CD4-positive, alpha-beta memory T cell (primary cell): ENCODE measurements at regions of chr2 and their contacts with region 1.

Region 1: GRCh38 chr2:96888072-96889011 is 18.5 kb upstream of the SEMA4C start:
- DNase-seq: no peak
- H3K4me3 ChIP-seq: no peak overlapping the region
- H3K4me3 Mint-ChIP-seq: no peak overlapping the region
- H3K27ac ChIP-seq: no peak overlapping the region
- H3K27ac Mint-ChIP-seq: peak overlapping the region in 4 of 7 donors; percentile 50 to 86 (median 78)
- H3K4me1 ChIP-seq: peaks cover 30% of the 10 kb centered on the region
- H3K4me1 Mint-ChIP-seq: peaks cover 30 to 46% (median 36%) of the 10 kb centered on the region in 4 donors
- H3K27me3 ChIP-seq: no peaks in the 10 kb centered on the region
- H3K27me3 Mint-ChIP-seq: no peaks in the 10 kb centered on the region

Region 2: GRCh38 chr2:96374211-96374951 is 514.0 kb before region 1 on chr2:
- CTCF ChIA-PET with region 1: no interaction called
- POLR2A ChIA-PET with region 1: no interaction called
- intact Hi-C with region 1: no loop called
- DNase-seq: no peak
- H3K4me3 ChIP-seq: no peak overlapping the region
- H3K4me3 Mint-ChIP-seq: no peak overlapping the region
- H3K27ac ChIP-seq: no peak overlapping the region
- H3K27ac Mint-ChIP-seq: no peak overlapping the region
- H3K4me1 ChIP-seq: no peaks in the 10 kb centered on the region
- H3K4me1 Mint-ChIP-seq: no peaks in the 10 kb centered on the region
- H3K27me3 ChIP-seq: no peaks in the 10 kb centered on the region
- H3K27me3 Mint-ChIP-seq: no peaks in the 10 kb centered on the region

Region 3: GRCh38 chr2:96927405-96928243 is 39.3 kb after region 1 on chr2:
- CTCF ChIA-PET with region 1: no interaction called
- POLR2A ChIA-PET with region 1: interaction called, 12 read pairs
- intact Hi-C with region 1: no loop called
- DNase-seq: no peak
- H3K4me3 ChIP-seq: no peak overlapping the region
- H3K4me3 Mint-ChIP-seq: no peak overlapping the region
- H3K27ac ChIP-seq: no peak overlapping the region
- H3K27ac Mint-ChIP-seq: no peak overlapping the region
- H3K4me1 ChIP-seq: peaks cover 27% of the 10 kb centered on the region
- H3K4me1 Mint-ChIP-seq: peaks cover 17 to 40% (median 24%) of the 10 kb centered on the region in 4 donors
- H3K27me3 ChIP-seq: no peaks in the 10 kb centered on the region
- H3K27me3 Mint-ChIP-seq: peaks cover 0 to 1% of the 10 kb centered on the region in 2 donors